Dorsolateral prefrontal cortex (tissue), 120 donors: ENCODE measurements at regions of chr7 and their contacts with region 1.

Region 1: GRCh38 chr7:135801045-135801693 is 52.6 kb upstream of the FAM180A start:
- DNase-seq: no peak
- H3K4me3 ChIP-seq: peak overlapping the region in 5 of 59 donors; percentile 5 to 26 (median 14)
- H3K27ac ChIP-seq: no peak overlapping the region
- H3K27me3 ChIP-seq: peaks cover 0 to 10% (median 0%) of the 10 kb centered on the region in 45 donors
- CTCF ChIP-seq: peak; percentile 70 to 96 (median 83)

Region 2: DNA sequence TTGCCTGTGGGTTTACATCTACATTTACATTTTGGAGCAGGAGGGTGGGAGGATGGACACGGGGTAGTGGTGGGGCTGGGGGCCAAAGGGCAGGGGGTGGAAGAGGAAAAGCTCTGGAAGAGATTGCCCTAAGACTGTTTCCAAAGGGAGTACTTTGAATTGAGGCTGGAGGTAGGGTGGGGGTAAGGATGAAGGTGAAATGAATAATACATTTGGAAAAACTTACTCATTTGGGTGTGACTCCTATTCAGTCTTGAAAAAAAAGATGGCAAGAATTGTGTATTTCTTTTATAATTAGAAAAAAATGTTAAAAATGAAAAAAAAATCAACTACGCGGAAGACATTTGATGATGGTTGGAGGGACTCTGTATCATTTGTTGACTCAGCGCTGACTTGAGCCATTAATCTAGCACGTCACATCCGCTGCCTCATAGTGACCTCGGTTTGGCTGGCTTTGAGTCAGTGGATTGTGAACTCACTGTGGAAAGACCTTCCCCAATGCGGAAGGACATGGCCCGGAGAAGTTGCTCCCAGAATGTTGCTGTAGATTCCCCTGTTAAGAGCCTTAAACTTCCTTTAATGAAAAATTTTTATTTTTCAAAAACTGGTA is 55.4 kb before region 1 on chr7:
- intact Hi-C with region 1: no loop called
- DNase-seq: no peak
- H3K4me3 ChIP-seq: no peak overlapping the region
- H3K27ac ChIP-seq: no peak overlapping the region
- H3K27me3 ChIP-seq: peaks cover 0 to 10% (median 0%) of the 10 kb centered on the region in 45 donors
- CTCF ChIP-seq: no peak

Region 3: DNA sequence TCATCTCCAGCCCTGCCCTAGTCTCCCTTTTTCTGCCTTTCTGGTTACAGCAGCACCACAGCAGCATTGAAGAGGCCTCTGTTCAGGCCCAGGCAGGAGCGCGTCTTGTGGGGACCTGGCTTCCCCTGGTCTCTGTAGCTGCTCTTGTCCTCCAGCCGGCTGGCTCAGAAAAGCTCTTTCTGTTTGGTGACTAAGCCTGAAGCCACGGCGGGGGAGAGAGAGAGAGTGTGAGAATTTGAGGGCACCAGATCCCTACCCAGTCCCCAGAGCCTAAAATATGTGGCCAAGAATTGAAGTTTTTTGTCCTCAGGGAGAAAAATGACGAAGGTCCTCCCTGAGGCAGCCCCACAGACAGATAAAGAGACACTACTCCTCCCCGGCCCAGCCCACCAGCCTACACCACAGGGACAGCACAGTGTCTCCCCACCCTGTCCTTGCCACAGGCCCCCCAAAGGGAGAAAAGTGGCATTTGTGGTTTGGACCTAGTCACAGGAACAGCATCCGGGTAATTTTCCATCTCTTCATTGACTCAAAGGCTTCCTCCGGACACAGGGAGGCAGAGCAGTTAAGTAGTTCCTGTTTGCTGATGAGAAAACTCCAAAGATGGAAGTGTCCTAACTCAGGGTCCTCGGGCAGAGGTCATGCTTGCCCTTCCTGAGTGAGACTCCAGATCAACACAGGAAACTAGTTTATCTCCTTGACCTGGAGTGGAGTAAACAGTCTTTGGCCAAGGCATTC is 39.2 kb before region 1 on chr7:
- intact Hi-C with region 1: no loop called
- DNase-seq: peak in 4 of 10 donors; percentile 37 to 51 (median 40)
- H3K4me3 ChIP-seq: no peak overlapping the region
- H3K27ac ChIP-seq: peak overlapping the region in 8 of 59 donors; percentile 7 to 61 (median 41)
- H3K27me3 ChIP-seq: peaks cover 0 to 30% (median 0%) of the 10 kb centered on the region in 45 donors
- CTCF ChIP-seq: no peak

Region 4: GRCh38 chr7:135911099-135911498 is 109.9 kb after region 1 on chr7:
- intact Hi-C with region 1: no loop called
- DNase-seq: peak in 4 of 10 donors; percentile 16 to 49 (median 35)
- H3K4me3 ChIP-seq: no peak overlapping the region
- H3K27ac ChIP-seq: peak overlapping the region in 1 of 59 donors; percentile 44
- H3K27me3 ChIP-seq: no peaks in the 10 kb centered on the region
- CTCF ChIP-seq: no peak

Region 5: GRCh38 chr7:136009488-136010079 is 208.4 kb after region 1 on chr7:
- intact Hi-C with region 1: loop called (anchors 1 to 2 kb)
- DNase-seq: no peak
- H3K4me3 ChIP-seq: no peak overlapping the region
- H3K27ac ChIP-seq: no peak overlapping the region
- H3K27me3 ChIP-seq: no peaks in the 10 kb centered on the region
- CTCF ChIP-seq: peak; percentile 70 to 96 (median 85)